Caco-2 (cell line): ENCODE measurements at regions of chr2 and their contacts with region 1.

Region 1: DNA sequence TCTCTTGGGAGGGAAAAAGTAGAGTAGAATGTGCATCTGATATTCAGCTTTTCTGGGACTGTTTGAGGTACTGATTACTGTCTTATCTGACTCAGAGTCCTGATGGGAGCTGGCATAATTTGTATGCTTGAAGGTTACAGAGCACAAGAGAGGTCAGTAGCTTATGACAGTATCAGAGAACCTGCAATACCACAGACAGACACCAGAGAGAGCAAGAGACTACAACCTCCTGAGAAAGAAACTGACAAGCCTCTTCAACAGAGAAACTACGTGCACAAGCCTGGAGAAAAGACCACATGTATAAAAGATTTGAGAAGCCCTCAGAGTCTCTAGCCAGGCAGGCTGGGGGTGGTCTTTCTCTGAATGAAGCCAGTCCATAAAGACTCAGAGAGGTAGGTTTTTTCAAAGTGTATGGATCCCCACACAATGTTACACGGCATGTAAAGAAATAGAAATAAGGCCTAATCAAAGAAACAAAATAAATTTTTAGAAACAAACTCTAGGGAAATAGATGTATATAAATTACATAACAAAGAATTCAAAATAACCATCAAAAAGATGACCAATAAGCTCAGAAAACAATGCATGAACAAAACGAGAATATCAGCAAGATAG is 568.3 kb downstream of the LRRTM4 start:
- DNase-seq: peak; percentile 38 to 65
- H3K4me3 ChIP-seq: no peak overlapping the region
- H3K4me3 Mint-ChIP-seq: no peak overlapping the region
- H3K27ac Mint-ChIP-seq: no peak overlapping the region
- H3K4me1 ChIP-seq: no peaks in the 10 kb centered on the region
- H3K4me1 Mint-ChIP-seq: no peaks in the 10 kb centered on the region
- H3K27me3 ChIP-seq: no peaks in the 10 kb centered on the region
- H3K27me3 Mint-ChIP-seq: no peaks in the 10 kb centered on the region
- CTCF ChIP-seq: peak; percentile 71 to 83

Region 2: DNA sequence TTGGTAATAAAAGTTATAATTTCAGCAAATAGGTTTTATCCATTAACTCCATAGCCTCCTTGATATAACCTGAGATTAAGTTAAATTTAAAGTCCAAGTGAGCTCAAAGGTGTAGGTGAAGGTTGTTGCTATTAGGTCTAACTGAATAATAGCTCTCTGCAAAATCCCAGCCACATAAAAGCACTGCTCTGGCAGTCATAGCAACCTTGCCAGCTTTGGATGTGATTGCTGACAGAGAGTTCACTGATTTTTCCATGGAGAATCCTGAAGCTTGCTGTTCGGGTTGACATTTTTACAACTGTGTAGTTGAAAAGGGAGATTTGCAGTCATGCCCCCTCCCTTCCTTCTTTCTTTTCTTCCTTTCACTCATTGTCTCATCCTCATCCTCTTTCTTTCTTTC is 374.3 kb after region 1 on chr2:
- CTCF ChIA-PET with region 1: no interaction called
- POLR2A ChIA-PET with region 1: no interaction called
- intact Hi-C with region 1: loop called (anchors 10 kb)
- DNase-seq: no peak
- H3K4me3 ChIP-seq: no peak overlapping the region
- H3K4me3 Mint-ChIP-seq: no peak overlapping the region
- H3K27ac Mint-ChIP-seq: no peak overlapping the region
- H3K4me1 ChIP-seq: no peaks in the 10 kb centered on the region
- H3K4me1 Mint-ChIP-seq: no peaks in the 10 kb centered on the region
- H3K27me3 ChIP-seq: no peaks in the 10 kb centered on the region
- H3K27me3 Mint-ChIP-seq: peaks cover 15% of the 10 kb centered on the region
- CTCF ChIP-seq: no peak